Activated naive CD4-positive, alpha-beta T cell treated with anti-CD3 and anti-CD28 coated beads for 36 hours (primary cell): ENCODE measurements at regions of chr3 and their contacts with region 1.

Region 1: GRCh38 chr3:186570096-186570940 is at the start of gene DNAJB11:
- DNase-seq: peak; percentile 100
- H3K4me3 Mint-ChIP-seq: peak within 1 kb of the TSS; percentile 95
- H3K27ac Mint-ChIP-seq: peak within 1 kb of the TSS; percentile 85
- H3K4me1 Mint-ChIP-seq: peaks cover 53% of the 10 kb centered on the region
- H3K27me3 Mint-ChIP-seq: no peaks in the 10 kb centered on the region
- total RNA-seq, gene DNAJB11: 30.0 to 30.5 TPM

Region 2: GRCh38 chr3:186108941-186109865 is 461.1 kb before region 1 on chr3 and contains the start of gene ETV5:
- CTCF ChIA-PET with region 1: no interaction called
- intact Hi-C with region 1: loop called (anchors 1 kb)
- DNase-seq: peak; percentile 97
- H3K4me3 Mint-ChIP-seq: peak within 1 kb of the TSS; percentile 78
- H3K27ac Mint-ChIP-seq: no peak within 1 kb of the TSS
- H3K4me1 Mint-ChIP-seq: peaks cover 30% of the 10 kb centered on the region
- H3K27me3 Mint-ChIP-seq: peaks cover 79% of the 10 kb centered on the region
- total RNA-seq, gene ETV5: 1.1 to 1.5 TPM

Region 3: DNA sequence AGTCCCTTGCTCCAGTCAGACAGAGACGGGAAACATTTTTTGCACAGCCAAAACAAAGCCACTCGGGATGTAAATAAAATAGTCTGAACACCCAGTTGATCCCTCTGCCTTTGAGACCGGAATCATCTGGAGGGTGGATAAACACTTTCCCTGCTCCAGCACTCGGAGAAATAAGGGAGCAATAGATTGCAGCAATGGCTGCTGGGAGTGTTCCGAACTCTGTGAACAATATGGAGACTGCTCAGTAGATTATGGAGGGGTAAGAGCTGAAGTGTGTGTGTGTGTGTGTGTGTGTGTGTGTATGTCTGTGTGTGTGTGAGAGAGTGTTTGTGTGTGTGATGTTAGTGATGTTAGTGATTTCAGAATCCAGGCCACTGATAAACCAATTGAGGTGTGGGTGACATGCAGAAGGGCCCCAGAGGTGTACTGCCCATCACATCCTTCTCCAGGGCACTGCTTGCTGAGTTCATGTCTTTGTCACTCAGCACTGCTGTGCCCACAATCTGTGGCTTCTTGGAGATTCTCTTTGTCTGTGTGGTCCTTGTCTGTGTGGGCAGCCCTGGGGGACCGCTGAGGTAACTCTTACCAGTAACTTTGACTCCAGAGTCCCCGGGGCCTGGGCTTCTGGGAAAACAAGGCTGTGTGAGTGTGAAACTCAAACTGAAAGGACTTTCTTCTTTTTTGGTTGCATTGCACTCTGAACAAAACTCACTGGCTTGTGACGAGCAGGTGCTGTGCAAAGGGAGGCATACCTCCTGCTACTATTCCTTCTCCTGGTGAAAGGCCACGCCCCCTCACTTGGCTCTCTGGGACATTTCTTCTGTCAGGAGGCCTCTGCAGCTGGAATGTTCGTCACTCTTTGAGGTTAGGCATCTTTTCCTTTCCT is 49.1 kb before region 1 on chr3:
- CTCF ChIA-PET with region 1: no interaction called
- intact Hi-C with region 1: no loop called
- DNase-seq: peak; percentile 79
- H3K4me3 Mint-ChIP-seq: peak overlapping the region; percentile 35
- H3K27ac Mint-ChIP-seq: peak overlapping the region; percentile 74
- H3K4me1 Mint-ChIP-seq: peaks cover 59% of the 10 kb centered on the region
- H3K27me3 Mint-ChIP-seq: no peaks in the 10 kb centered on the region

Region 4: GRCh38 chr3:186589121-186589520 is 18.8 kb after region 1 on chr3:
- CTCF ChIA-PET with region 1: interaction called, 4 read pairs
- intact Hi-C with region 1: loop called (anchors 1 kb)
- DNase-seq: no peak
- H3K4me3 Mint-ChIP-seq: no peak overlapping the region
- H3K27ac Mint-ChIP-seq: no peak overlapping the region
- H3K4me1 Mint-ChIP-seq: peaks cover 21% of the 10 kb centered on the region
- H3K27me3 Mint-ChIP-seq: no peaks in the 10 kb centered on the region

Region 5: GRCh38 chr3:186635532-186635931 is 65.2 kb after region 1 on chr3:
- CTCF ChIA-PET with region 1: no interaction called
- intact Hi-C with region 1: no loop called
- DNase-seq: no peak
- H3K4me3 Mint-ChIP-seq: no peak overlapping the region
- H3K27ac Mint-ChIP-seq: no peak overlapping the region
- H3K4me1 Mint-ChIP-seq: no peaks in the 10 kb centered on the region
- H3K27me3 Mint-ChIP-seq: peaks cover 3% of the 10 kb centered on the region

Region 6: DNA sequence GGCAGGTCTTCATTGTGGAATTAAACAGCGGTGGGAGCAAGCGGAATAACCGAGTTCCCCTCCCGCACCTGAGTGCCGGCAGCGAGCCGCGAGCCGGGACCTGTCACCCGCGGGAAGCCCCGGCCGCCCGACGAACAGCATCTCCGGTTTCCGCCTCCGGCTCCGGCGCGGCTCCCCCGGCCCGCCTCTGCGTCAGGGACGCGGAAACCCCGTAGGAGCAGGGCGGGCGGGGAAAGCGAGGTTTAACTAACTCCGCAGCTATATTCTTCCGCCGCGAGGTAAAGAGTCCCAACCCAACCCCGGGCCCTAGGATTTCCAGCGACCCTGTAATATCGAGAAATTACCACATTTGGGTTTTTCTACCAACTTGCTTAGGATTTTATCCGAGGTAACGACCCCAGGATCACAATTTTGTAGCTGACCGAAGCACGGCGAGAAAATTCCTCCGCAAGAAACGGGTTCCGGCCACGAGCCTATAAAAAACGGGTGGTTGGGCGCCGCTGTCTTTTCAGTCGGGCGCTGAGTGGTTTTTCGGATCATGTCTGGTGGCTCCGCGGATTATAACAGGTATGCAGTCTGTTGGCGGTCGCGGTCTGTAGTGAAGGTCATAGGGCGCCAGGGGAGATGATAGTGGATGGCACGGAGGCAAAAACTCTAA is 212.9 kb after region 1 on chr3 and contains the start of gene EIF4A2:
- CTCF ChIA-PET with region 1: no interaction called
- intact Hi-C with region 1: loop called (anchors 1 kb)
- DNase-seq: peak; percentile 91
- H3K4me3 Mint-ChIP-seq: peak within 1 kb of the TSS; percentile 99
- H3K27ac Mint-ChIP-seq: peak within 1 kb of the TSS; percentile 100
- H3K4me1 Mint-ChIP-seq: peaks cover 29% of the 10 kb centered on the region
- H3K27me3 Mint-ChIP-seq: peaks cover 3% of the 10 kb centered on the region
- total RNA-seq, gene EIF4A2: 445 to 469 TPM

Region 7: DNA sequence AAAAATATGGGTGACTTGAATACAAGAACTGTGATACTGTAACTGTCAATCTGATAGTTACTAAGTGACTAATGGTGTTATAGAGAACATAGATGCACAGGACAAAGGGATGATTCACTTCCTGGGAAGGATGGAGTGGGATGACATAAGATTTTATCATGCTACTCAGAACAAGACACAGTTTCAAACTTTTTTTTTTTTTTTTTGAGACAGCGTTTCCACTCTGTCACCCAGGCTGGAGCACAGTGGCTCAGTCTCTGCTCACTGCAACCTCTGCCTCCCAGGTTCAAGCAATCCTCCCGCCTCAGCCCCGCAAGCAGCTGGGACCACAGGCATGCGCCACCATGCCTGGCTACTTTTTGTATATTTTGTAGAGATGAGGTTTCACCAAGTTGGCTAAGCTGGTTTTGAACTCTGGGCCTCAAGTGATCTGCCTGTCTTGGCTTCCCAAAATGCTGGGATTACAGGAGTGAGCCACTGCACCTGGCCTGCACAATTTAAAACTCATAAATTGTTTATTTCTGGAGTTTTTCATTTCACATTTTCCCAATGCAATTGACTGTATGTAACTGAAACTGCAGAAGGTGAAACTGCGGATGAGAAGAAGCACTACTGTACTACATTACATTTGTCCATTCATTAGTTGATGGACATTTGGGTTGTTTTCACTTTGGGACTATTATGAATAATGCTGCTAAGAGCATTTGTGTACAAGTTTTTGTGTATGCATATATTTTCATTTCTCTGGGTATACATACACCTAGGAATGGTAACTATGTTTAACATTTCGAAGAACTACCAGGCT is 312.8 kb after region 1 on chr3:
- CTCF ChIA-PET with region 1: no interaction called
- intact Hi-C with region 1: loop called (anchors 5 kb)
- DNase-seq: peak; percentile 74
- H3K4me3 Mint-ChIP-seq: peak overlapping the region; percentile 14
- H3K27ac Mint-ChIP-seq: peak overlapping the region; percentile 72
- H3K4me1 Mint-ChIP-seq: peaks cover 56% of the 10 kb centered on the region
- H3K27me3 Mint-ChIP-seq: no peaks in the 10 kb centered on the region